Activated naive CD4-positive, alpha-beta T cell treated with anti-CD3 and anti-CD28 coated beads, Interleukin-2, amount 10 ng/mL, durations not matched to agents 7 days and 5 days (primary cell): ENCODE measurements at regions of chr6 and their contacts with region 1.

Region 1: DNA sequence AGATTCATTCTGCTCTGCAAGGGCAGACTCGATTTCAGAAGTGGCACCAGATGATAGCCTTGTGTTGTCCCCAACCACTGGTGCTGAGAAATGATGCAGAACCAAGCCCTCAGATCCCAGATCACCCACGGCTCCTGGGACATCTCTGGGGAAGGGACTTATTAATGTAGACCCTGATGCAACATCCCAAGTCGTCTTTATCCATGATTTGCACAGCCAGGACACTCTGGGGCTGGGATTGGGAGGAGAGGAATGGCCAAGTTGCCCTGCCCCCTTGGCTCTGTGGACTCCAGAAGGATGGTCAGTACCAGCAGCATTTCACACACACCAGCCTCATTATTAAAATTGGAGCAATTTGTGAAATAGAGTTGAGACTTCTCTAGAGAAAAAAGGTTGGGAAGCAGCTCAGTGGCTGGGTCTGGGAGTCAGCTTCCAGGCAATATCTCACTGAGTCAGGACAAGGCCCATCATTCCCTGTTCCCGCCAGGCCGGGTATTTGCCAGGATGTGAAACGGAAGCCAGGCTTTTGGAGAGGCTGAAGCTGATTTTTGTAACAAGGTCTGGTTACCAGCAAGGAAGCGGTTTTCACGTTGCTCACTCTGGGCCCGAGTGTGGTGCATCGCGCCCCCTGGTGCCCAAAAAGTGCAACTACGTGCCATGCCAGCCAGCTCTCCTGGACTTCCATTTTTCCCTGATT is 67.4 kb downstream of the ZBTB2 start:
- DNase-seq: peak; percentile 80
- H3K4me3 Mint-ChIP-seq: no peak overlapping the region
- H3K27ac Mint-ChIP-seq: no peak overlapping the region
- H3K4me1 Mint-ChIP-seq: peaks cover 26% of the 10 kb centered on the region
- H3K27me3 Mint-ChIP-seq: peaks cover 72% of the 10 kb centered on the region

Region 2: GRCh38 chr6:150891888-150892485 is 432.0 kb before region 1 on chr6:
- CTCF ChIA-PET with region 1: interaction called, 196 read pairs
- DNase-seq: peak; percentile 76
- H3K4me3 Mint-ChIP-seq: no peak overlapping the region
- H3K27ac Mint-ChIP-seq: no peak overlapping the region
- H3K4me1 Mint-ChIP-seq: peaks cover 31% of the 10 kb centered on the region
- H3K27me3 Mint-ChIP-seq: no peaks in the 10 kb centered on the region

Region 3: GRCh38 chr6:151014404-151015100 is 309.4 kb before region 1 on chr6:
- CTCF ChIA-PET with region 1: interaction called, 166 read pairs
- DNase-seq: peak; percentile 73
- H3K4me3 Mint-ChIP-seq: no peak overlapping the region
- H3K27ac Mint-ChIP-seq: no peak overlapping the region
- H3K4me1 Mint-ChIP-seq: peaks cover 12% of the 10 kb centered on the region
- H3K27me3 Mint-ChIP-seq: no peaks in the 10 kb centered on the region

Region 4: DNA sequence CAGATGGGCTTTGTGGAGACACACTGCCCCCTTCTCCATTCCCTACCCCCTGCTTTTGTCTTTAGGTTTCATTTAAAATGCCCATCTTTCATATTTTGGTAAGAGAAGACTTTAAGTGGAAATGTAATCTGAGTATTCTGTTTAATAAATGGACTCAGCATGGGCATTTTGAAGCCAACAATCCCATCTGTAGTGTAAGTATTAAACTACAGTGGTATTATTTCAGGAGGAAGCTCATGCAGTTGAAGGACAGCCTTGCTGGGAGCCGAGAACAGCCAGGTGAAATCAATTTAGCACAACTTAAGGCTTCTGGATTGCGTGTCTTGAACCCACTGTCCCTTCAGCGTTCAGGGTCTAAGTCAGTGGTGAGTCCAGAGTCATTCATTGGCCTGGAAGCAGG is 20.7 kb before region 1 on chr6:
- CTCF ChIA-PET with region 1: interaction called, 10 read pairs
- DNase-seq: no peak
- H3K4me3 Mint-ChIP-seq: no peak overlapping the region
- H3K27ac Mint-ChIP-seq: no peak overlapping the region
- H3K4me1 Mint-ChIP-seq: no peaks in the 10 kb centered on the region
- H3K27me3 Mint-ChIP-seq: peaks cover 23% of the 10 kb centered on the region